BJ (cell line): ENCODE measurements at regions of chr17 and their contacts with region 1.

Region 1: DNA sequence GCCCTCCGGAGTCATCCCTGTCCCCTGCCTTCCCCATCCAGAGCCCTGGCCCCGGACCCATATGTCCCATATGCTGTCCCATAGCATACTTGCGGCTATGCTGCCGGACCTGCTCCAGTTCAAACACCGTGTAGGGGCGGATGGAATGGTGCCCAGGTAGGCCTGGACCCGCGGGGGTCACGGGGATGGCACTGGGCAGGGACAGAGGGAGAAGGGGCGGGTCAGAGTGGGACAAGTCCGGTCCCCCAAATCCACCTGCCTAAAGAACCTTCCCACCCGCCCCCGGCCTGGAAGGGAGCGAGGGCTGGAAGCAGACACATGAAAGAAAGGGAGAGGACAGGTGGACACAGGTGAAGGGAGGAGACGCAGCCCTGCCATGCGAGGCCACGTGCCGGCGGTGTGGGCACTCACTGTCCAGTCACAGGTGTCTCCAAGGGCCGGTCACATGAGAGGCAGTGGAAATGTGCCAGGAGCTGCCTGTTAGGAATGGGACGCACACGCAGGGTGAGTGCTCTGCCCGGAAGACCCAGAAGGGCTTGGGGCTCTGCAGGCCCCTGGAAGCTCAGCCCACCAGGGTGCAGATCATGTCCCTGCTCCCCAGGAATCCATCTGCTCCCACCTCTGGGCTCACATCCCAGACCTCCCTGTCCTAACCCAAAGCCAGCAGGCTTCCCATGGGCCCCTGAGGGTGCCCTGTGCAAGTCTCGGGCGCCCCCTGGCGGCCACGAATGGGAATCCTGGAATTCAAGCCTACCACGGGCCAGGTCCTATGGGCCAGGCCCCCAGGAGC is 14.0 kb downstream of the UBALD2 start:
- DNase-seq: no peak
- H3K4me3 ChIP-seq: no peak overlapping the region
- H3K27me3 ChIP-seq: no peaks in the 10 kb centered on the region
- CTCF ChIP-seq: peak; percentile 98

Region 2: GRCh38 chr17:76014184-76014924 is 264.8 kb before region 1 on chr17:
- CTCF ChIA-PET with region 1: interaction called, 20 read pairs
- POLR2A ChIA-PET with region 1: no interaction called
- DNase-seq: no peak
- H3K4me3 ChIP-seq: no peak overlapping the region
- H3K27me3 ChIP-seq: peaks cover 1% of the 10 kb centered on the region; the same call in 1 of the 2 replicates
- CTCF ChIP-seq: peak; percentile 99

Region 3: GRCh38 chr17:76121932-76122430 is 157.2 kb before region 1 on chr17:
- CTCF ChIA-PET with region 1: interaction called, 247 read pairs
- POLR2A ChIA-PET with region 1: no interaction called
- DNase-seq: no peak
- H3K4me3 ChIP-seq: peak overlapping the region; percentile 18
- H3K27me3 ChIP-seq: no peaks in the 10 kb centered on the region
- CTCF ChIP-seq: no peak

Region 4: GRCh38 chr17:76153640-76154039 is 125.5 kb before region 1 on chr17:
- CTCF ChIA-PET with region 1: interaction called, 21 read pairs
- POLR2A ChIA-PET with region 1: no interaction called
- DNase-seq: no peak
- H3K4me3 ChIP-seq: no peak overlapping the region
- H3K27me3 ChIP-seq: peaks cover 10% of the 10 kb centered on the region
- CTCF ChIP-seq: peak; percentile 43

Region 5: DNA sequence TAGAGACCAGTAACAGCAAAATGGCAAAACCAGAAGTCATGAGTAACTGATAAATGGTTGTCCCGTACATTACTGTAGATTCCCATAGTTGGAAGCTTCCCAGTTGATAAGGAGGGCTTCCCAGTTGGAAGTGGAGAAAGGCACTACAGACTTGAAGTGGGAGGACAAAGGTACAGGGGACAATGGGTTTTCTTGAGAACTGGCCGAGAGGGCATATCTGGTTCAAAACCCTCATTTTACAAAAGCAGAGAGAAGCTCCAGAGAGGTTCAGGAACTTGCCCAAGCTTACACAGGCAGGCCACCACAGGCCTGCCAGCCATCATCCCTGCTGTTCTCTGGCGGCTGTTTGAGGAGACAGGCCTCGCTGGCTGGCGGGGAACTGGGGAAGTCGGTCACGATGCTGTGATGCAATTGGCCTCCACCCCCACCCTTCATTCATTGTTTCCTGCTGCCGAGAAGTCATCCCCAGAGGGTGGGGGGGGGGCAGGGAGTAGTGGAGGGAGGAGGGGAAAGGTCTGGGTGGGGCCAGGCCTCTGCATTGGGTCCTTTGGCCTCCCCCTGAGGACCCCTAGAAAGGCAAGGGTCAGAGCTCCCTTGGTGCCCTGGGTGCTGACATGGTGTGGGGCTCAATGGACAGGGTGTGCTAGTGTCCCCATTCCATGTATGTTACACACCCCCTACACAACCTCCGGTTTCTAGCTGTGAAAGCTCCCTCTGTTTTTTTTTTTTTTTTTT is 11.0 kb before region 1 on chr17:
- CTCF ChIA-PET with region 1: interaction called, 40 read pairs
- POLR2A ChIA-PET with region 1: no interaction called
- DNase-seq: no peak
- H3K4me3 ChIP-seq: no peak overlapping the region
- H3K27me3 ChIP-seq: no peaks in the 10 kb centered on the region
- CTCF ChIP-seq: no peak

Region 6: GRCh38 chr17:76314392-76315227 is 35.5 kb after region 1 on chr17:
- CTCF ChIA-PET with region 1: no interaction called
- POLR2A ChIA-PET with region 1: no interaction called
- DNase-seq: no peak
- H3K4me3 ChIP-seq: no peak overlapping the region
- H3K27me3 ChIP-seq: no peaks in the 10 kb centered on the region
- CTCF ChIP-seq: no peak

Region 7: GRCh38 chr17:76523084-76524037 is 244.2 kb after region 1 on chr17:
- CTCF ChIA-PET with region 1: no interaction called
- POLR2A ChIA-PET with region 1: no interaction called
- DNase-seq: no peak
- H3K4me3 ChIP-seq: no peak overlapping the region
- H3K27me3 ChIP-seq: no peaks in the 10 kb centered on the region
- CTCF ChIP-seq: peak; percentile 100